Left ventricle myocardium inferior (tissue), 1 donor: ENCODE measurements at regions of chr5 and their contacts with region 1.

Region 1: GRCh38 chr5:58498340-58498942 is 7.2 kb downstream of the GAPT start:
- DNase-seq: no peak
- H3K4me3 ChIP-seq: no peak overlapping the region
- H3K27ac ChIP-seq: no peak overlapping the region
- H3K4me1 ChIP-seq: no peaks in the 10 kb centered on the region
- H3K27me3 ChIP-seq: peaks cover 28% of the 10 kb centered on the region
- CTCF ChIP-seq: peak; percentile 80

Region 2: GRCh38 chr5:58022055-58022454 is 476.4 kb before region 1 on chr5:
- intact Hi-C with region 1: no loop called
- DNase-seq: no peak
- H3K4me3 ChIP-seq: no peak overlapping the region
- H3K27ac ChIP-seq: peak overlapping the region; percentile 32
- H3K4me1 ChIP-seq: peaks cover 39% of the 10 kb centered on the region
- H3K27me3 ChIP-seq: no peaks in the 10 kb centered on the region
- CTCF ChIP-seq: no peak

Region 3: DNA sequence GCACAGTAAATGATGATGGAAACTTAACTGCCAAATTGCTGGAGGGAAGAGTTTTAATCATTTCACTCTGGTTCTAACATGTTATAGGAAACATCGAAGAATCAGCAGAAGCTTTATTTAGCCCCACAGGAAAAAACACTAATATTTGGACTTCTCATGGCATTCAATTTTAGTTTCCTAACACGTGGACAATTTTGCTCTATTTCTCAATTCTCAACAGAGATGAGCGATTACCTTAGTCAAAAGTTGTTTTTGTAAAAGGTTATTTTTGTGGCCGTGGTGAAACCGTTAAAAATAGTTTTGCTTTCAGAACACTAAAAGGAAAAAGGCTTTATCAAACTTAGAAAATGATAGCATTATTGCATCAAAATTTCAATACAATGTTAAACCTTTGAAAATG is 273.8 kb before region 1 on chr5:
- intact Hi-C with region 1: no loop called
- DNase-seq: no peak
- H3K4me3 ChIP-seq: no peak overlapping the region
- H3K27ac ChIP-seq: peak overlapping the region; percentile 14
- H3K4me1 ChIP-seq: peaks cover 32% of the 10 kb centered on the region
- H3K27me3 ChIP-seq: no peaks in the 10 kb centered on the region
- CTCF ChIP-seq: no peak

Region 4: DNA sequence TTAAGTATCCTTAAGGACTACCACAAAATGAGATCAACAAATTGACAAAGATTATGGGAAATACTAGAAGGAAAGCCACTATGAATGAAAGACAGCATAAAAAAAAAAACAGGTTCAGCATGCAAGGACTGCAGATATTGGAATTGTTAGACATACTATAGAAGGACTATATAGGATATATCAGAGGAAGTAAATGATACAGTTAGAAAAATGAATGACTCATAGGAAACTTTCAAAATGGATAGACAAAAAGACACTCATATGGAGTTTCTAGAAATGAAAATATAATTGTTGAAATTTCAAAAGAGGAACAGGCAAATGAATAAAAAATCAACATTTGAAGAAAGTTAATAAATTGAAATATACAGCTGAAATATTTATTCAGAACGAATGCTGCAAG is 219.2 kb before region 1 on chr5:
- intact Hi-C with region 1: no loop called
- DNase-seq: no peak
- H3K4me3 ChIP-seq: no peak overlapping the region
- H3K27ac ChIP-seq: no peak overlapping the region
- H3K4me1 ChIP-seq: peaks cover under 1% of the 10 kb centered on the region
- H3K27me3 ChIP-seq: no peaks in the 10 kb centered on the region
- CTCF ChIP-seq: no peak

Region 5: DNA sequence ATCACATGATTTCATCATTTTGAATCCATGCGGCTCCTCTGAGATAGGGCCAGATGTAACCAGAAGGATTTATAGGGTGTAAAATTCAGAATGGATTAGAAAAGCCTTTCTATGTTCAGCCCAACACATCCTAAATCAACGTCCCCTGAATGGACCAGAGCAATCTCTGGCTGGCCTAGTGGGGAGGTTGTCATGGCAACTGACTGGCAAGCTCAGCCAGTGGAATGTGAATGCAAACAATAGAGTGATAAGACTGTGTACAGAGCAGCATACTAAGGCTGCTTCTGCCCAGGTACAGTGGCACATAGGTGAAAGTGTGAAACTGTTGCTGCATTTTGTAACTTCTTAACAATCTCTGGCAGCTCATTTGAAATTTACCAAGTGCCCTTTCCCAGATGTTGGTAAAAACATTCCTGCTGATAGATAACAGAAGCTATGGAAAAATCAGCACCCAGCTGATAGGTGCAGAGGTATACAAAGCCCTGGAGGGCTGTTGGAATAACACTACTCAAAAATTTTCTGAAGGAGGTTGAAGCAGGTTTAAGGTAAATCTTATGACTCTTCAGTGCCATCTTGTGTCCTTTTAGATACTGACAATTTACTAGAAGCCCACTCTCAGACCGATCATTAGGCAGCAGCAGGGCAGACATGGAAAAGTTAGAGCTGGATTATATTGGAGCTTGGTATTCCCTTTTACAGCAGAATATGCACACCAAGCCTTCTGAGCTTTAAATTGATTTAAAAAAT is 351.7 kb after region 1 on chr5:
- intact Hi-C with region 1: loop called (anchors 2 kb)
- DNase-seq: no peak
- H3K4me3 ChIP-seq: no peak overlapping the region
- H3K27ac ChIP-seq: no peak overlapping the region
- H3K4me1 ChIP-seq: no peaks in the 10 kb centered on the region
- H3K27me3 ChIP-seq: peaks cover 49% of the 10 kb centered on the region
- CTCF ChIP-seq: peak; percentile 66